Dorsolateral prefrontal cortex (tissue), 120 donors: ENCODE measurements at regions of chr12 and their contacts with region 1.

Region 1: GRCh38 chr12:120725659-120726509 is at the start of gene ACADS:
- DNase-seq: peak; percentile 66 to 89 (median 79)
- H3K4me3 ChIP-seq: peak within 1 kb of the TSS; percentile 59 to 88 (median 78)
- H3K27ac ChIP-seq: peak within 1 kb of the TSS in 57 of 59 donors; percentile 14 to 86 (median 71)
- H3K27me3 ChIP-seq: no peaks in the 10 kb centered on the region
- CTCF ChIP-seq: peak in 37 of 56 donors; percentile 8 to 62 (median 29)
- total RNA-seq, gene ACADS: 6.5 to 27.7 (median 14.2) TPM

Region 2: DNA sequence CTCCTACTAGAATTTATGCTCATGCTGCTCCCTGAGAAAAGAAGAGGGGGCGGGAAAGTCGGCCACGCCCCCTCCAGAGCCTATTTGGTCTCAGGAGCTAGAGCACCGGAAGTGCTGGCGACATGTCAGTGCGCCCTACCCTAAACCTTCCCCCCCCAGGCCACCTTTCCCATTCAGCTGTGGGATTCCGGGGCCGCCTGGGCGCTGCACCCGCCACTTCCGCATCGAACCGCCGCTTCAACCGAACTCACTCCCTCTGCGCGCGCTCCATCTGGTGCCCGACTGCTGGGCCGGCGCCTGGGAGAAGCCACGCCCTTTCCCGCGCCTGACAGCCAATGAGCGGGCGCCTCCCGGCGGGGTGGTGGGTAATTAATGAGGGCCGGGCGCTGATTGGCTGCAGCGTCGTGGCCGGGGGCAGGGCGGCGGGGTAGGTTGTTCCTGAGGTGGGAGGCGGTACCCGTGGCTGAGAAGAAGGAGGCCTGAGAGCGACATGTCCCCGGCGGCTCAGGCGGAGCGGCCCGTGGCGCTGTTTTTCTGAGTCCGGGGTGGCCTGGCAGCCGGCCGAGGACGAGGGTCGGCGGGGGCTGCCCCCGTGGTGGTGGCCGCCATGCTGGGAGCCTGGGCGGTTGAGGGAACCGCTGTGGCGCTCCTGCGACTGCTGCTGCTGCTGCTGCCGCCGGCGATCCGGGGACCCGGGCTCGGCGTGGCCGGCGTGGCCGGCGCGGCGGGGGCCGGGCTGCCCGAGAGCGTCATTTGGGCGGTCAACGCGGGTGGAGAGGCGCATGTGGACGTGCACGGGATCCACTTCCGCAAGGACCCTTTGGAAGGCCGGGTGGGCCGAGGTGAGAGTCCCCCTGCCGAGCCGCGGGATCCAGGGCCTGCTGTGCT is 39.0 kb before region 1 on chr12 and contains the start of gene MLEC:
- intact Hi-C with region 1: loop called in 1 of 2 experiments (anchors 5 kb)
- DNase-seq: peak; percentile 96 to 99 (median 98)
- H3K4me3 ChIP-seq: peak within 1 kb of the TSS; percentile 70 to 100 (median 94)
- H3K27ac ChIP-seq: peak within 1 kb of the TSS; percentile 81 to 99 (median 96)
- H3K27me3 ChIP-seq: no peaks in the 10 kb centered on the region
- CTCF ChIP-seq: peak in 31 of 56 donors; percentile 8 to 58 (median 31)
- total RNA-seq, gene MLEC: 50.4 to 97.1 (median 73.3) TPM

Region 3: GRCh38 chr12:120818416-120818815 is 92.5 kb after region 1 on chr12:
- intact Hi-C with region 1: loop called in 1 of 2 experiments (anchors 10 kb)
- DNase-seq: no peak
- H3K4me3 ChIP-seq: peak overlapping the region in 15 of 59 donors; percentile 2 to 44 (median 17)
- H3K27ac ChIP-seq: peak overlapping the region in 58 of 59 donors; percentile 68 to 97 (median 91)
- H3K27me3 ChIP-seq: no peaks in the 10 kb centered on the region
- CTCF ChIP-seq: peak in 3 of 56 donors; percentile 5 to 10 (median 9)

Region 4: GRCh38 chr12:120849765-120850164 is 123.9 kb after region 1 on chr12:
- intact Hi-C with region 1: loop called in 1 of 2 experiments (anchors 5 kb)
- DNase-seq: no peak
- H3K4me3 ChIP-seq: no peak overlapping the region
- H3K27ac ChIP-seq: peak overlapping the region in 31 of 59 donors; percentile 0 to 93 (median 40)
- H3K27me3 ChIP-seq: no peaks in the 10 kb centered on the region
- CTCF ChIP-seq: no peak